Thyroid gland (tissue), 4 donors: ENCODE measurements at regions of chr1 and their contacts with region 1.

Region 1: DNA sequence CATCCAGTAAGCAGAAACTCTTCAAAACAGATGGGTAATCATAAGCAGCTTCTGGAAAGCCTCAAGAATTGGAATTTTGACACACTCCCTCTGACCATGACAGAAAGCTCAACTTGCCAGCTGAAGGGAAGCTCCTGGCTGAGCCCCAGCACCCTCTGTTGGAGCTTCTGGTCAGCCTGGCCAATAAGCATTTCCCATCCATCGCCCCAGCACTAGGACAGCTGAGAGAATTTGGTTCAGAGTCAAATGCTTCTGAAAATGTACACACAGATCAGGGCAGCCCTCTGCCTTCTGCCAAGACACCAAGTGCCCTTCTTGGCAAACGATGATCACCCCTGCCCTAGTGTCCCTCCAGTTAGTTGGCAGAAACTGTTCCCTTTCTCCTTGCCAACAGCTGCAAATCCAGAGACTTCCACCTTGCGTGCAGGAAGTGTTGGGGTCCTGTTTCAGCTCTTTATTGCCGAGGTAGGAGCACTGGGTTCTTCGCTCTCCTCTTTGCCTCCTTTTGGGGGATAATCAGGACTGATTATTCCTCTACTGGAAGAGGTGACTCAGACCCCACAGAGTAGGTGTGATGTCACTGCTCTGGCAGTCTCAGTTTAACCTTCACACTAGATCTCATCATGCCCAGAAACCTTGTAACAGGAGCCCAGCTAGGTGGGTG is 11.9 kb downstream of the PIGV start:
- DNase-seq: peak; percentile 94 to 95
- H3K4me3 ChIP-seq: peak overlapping the region in 1 of 3 donors; percentile 11
- H3K27ac ChIP-seq: peak overlapping the region; percentile 62 to 92 (median 76)
- H3K4me1 ChIP-seq: peaks cover 21 to 54% of the 10 kb centered on the region in 2 donors
- H3K27me3 ChIP-seq: no peaks in the 10 kb centered on the region
- CTCF ChIP-seq: no peak
- POLR2A ChIP-seq: no peak

Region 2: GRCh38 chr1:26864610-26865527 is 65.3 kb after region 1 on chr1:
- intact Hi-C with region 1: loop called (anchors 10 kb)
- DNase-seq: peak; percentile 98 to 99
- H3K4me3 ChIP-seq: peak overlapping the region; percentile 0 to 43 (median 39)
- H3K27ac ChIP-seq: peak overlapping the region; percentile 90 to 99 (median 96)
- H3K4me1 ChIP-seq: peaks cover 3 to 19% of the 10 kb centered on the region in 2 donors
- H3K27me3 ChIP-seq: no peaks in the 10 kb centered on the region
- CTCF ChIP-seq: no peak
- POLR2A ChIP-seq: peak; percentile 35 to 79

Region 3: GRCh38 chr1:28631713-28632112 is 1832.1 kb after region 1 on chr1:
- intact Hi-C with region 1: no loop called
- DNase-seq: no peak
- H3K4me3 ChIP-seq: no peak overlapping the region
- H3K27ac ChIP-seq: no peak overlapping the region
- H3K4me1 ChIP-seq: no peaks in the 10 kb centered on the region
- H3K27me3 ChIP-seq: no peaks in the 10 kb centered on the region
- CTCF ChIP-seq: no peak
- POLR2A ChIP-seq: no peak